Esophagus muscularis mucosa (tissue), 4 donors: ENCODE measurements at regions of chr11 and their contacts with region 1.

Region 1: GRCh38 chr11:20355221-20356219 is 8.0 kb upstream of the HTATIP2 start:
- DNase-seq: no peak
- H3K4me3 ChIP-seq: no peak overlapping the region
- H3K27ac ChIP-seq: no peak overlapping the region
- H3K4me1 ChIP-seq: no peaks in the 10 kb centered on the region
- H3K27me3 ChIP-seq: peaks cover 0 to 10% (median 0%) of the 10 kb centered on the region in 4 donors
- CTCF ChIP-seq: peak; percentile 36 to 47 (median 47)
- EP300 ChIP-seq: no peak
- POLR2A ChIP-seq: no peak

Region 2: DNA sequence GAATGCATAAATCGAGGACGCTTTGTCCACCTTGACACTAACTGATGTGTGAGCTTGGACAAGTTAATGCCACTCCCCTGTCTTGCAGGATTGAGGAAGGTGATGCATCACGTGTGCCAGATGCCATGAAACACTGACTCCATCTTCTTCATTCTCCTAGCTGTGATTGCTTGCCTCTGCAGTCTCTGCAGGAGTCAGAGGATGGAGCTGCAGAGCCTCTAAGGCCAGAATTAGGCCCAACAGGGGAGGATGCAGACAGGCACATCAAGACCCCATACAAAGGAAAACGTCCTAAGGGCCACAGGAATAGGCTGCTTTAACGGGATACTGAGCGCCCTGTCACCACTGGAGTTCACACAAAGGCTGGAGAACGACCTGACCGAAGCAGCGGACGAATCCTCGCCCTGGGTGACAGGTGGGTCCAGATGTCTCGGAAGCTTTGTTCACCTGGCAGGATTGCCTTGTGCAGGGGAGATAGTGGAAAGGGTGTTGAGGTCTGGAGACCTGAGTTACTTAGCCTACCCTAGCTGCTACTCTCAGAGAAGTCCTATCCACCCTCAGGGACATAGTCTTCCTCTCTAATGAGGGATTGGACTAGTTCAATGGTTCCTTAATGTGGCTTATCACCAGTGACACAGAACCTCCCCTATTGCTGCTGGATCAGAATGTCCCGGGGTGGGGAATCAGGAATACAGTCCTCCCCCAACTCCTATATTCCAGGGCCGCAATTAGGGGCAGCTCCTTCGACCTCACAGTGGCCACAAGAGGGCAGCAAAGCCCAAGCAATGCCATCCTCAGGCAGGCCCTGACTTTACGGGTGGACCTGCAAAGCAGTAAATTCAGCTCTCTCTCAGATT is 227.6 kb before region 1 on chr11:
- intact Hi-C with region 1: loop called (anchors 5 kb)
- DNase-seq: no peak
- H3K4me3 ChIP-seq: no peak overlapping the region
- H3K27ac ChIP-seq: no peak overlapping the region
- H3K4me1 ChIP-seq: peaks cover 8 to 14% (median 12%) of the 10 kb centered on the region in 4 donors
- H3K27me3 ChIP-seq: no peaks in the 10 kb centered on the region
- CTCF ChIP-seq: peak; percentile 76 to 91 (median 80)
- EP300 ChIP-seq: no peak
- POLR2A ChIP-seq: no peak